ENCODE measurements at regions of chr19 and their contacts with region 1.

Region 1: DNA sequence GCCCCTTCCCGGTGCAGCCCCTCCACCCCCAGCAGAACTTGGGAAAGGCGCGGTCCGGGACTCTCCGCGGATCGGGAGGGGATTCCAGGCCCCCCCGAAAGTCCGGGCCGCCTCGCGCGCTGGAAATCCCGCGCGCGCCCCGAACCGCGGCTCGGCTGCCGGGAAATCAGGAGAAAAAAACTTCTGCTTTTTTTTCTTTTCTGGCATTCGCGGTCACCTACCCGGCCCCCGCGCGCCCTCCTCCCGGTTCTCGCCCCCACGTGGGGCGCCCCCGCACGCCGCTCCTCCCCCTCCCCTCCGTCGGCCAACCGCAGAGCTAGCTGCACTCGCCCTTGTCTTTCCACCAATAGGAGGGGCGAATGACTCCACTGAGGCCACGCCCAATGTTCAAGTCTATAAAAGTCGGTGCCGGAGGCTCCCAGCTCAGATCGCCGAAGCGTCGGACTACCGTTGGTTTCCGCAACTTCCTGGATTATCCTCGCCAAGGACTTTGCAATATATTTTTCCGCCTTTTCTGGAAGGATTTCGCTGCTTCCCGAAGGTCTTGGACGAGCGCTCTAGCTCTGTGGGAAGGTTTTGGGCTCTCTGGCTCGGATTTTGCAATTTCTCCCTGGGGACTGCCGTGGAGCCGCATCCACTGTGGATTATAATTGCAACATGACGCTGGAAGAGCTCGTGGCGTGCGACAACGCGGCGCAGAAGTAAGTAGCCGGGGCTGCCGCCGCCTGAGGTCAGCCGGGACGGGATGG is at the start of gene GADD45B:
- DNase-seq: peak; percentile 97
- H3K4me3 Mint-ChIP-seq: peak within 1 kb of the TSS; percentile 99
- H3K27ac Mint-ChIP-seq: peak within 1 kb of the TSS; percentile 88
- H3K4me1 Mint-ChIP-seq: peaks cover 19% of the 10 kb centered on the region
- H3K27me3 Mint-ChIP-seq: no peaks in the 10 kb centered on the region
- total RNA-seq, gene GADD45B: 31.2 to 39.2 TPM

Region 2: DNA sequence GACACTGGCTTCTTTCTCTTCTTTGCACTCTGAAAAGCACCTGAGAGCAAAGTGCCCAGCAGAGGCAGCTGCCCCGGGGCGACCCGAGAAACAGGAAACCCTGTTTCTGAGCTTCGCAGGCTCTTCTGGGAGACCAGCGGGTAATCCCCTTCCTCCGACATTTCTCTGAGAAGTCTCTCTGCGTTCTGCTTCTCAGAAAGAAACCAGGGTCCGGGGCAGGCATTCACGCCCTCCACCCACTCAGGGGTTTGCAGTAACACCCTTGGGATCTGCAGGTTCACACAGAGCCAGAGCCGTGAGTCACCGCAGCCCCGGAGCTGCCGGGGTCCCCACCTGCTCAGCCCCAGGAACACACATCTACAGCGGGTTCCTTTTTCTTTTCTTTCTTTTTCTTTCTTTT is 86.0 kb after region 1 on chr19:
- CTCF ChIA-PET with region 1: interaction called, 5 read pairs
- POLR2A ChIA-PET with region 1: interaction called, 13 read pairs
- DNase-seq: peak; percentile 80
- H3K4me3 Mint-ChIP-seq: peak overlapping the region; percentile 85
- H3K27ac Mint-ChIP-seq: peak overlapping the region; percentile 99
- H3K4me1 Mint-ChIP-seq: peaks cover 50% of the 10 kb centered on the region
- H3K27me3 Mint-ChIP-seq: no peaks in the 10 kb centered on the region

Region 3: DNA sequence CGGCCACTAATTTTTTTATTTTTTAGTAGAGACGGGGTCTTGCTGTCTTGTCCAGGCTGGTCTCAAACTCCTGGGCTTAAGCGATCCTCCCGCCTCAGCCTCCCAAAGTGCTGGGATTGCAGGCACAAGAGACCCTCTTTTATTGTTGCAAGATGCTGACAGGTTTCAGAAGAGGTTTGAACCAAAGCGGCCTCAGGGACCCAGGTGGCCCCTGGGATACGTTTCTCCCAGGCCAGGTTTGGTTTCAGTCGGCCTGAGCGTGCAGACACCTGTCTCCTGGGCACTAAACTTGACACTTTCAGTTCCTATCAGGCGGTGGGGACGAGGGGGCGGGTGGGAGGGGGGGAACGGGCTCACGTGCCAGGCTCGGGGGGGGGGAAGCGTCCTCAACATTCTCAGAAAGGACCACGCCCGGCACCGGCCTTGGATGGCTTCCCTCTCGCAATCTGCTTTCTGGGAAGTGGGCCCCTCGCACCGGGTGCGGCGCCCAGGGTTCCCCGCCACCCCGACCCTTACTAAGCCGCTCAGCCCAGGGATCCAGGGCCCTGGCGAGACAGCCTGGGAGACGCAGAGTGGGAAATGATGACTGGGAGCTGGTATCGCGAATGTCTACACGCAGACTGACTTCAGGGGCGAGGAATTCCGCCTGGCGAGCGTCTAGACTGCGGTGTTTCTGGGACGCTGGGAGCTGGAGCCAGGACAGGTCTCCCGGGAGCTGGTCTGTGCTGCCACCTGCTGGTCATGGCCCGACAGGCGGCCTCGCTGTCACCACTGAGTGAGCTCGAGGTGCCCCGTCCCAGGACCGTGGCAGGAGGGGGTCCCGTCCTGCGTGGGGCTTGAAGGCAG is 135.0 kb after region 1 on chr19:
- CTCF ChIA-PET with region 1: interaction called, 30 read pairs
- POLR2A ChIA-PET with region 1: interaction called, 12 read pairs
- DNase-seq: peak; percentile 90
- H3K4me3 Mint-ChIP-seq: peak overlapping the region; percentile 71
- H3K27ac Mint-ChIP-seq: peak overlapping the region; percentile 34
- H3K4me1 Mint-ChIP-seq: peaks cover 51% of the 10 kb centered on the region
- H3K27me3 Mint-ChIP-seq: peaks cover 13% of the 10 kb centered on the region

Region 4: DNA sequence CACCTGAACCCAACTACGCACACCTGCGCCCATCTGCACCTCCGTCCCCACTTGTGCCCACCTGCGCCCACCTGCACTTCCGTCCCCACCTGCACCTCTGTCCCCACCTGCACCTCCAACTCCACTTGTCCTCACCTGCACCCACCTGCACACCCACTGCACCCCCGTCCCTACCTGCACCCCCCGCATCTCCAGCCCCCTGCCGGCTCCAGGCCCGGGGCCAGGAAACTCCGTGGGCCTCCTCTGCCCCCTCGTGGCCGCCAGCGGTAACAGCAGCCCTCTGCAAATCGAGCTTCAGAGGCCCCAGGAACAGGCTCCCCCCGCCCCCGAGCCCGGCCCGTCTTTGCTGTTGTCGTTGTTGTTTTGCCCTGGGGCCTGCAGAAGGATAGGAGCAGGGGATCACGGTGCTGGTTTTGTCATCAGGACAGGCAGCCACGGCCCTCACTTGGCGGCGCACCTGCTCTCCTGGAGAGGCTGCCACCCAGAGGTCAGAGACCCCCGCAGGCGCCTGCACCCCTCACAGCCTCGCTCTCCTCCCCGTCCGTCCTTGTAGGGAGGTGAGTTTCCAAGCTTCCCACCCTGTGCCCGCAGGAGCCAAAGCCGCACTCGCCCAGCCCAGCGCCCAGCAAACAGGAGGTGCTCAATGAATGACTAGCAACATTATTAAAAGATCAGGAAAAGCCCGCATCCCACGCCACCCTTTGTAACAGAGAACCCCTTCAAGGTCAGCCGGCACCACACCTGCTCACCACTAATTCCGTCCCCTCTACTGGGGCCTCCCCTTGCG is 161.2 kb after region 1 on chr19:
- CTCF ChIA-PET with region 1: interaction called, 18 read pairs
- POLR2A ChIA-PET with region 1: interaction called, 3 read pairs
- DNase-seq: peak; percentile 78
- H3K4me3 Mint-ChIP-seq: peak overlapping the region; percentile 36
- H3K27ac Mint-ChIP-seq: no peak overlapping the region
- H3K4me1 Mint-ChIP-seq: peaks cover 19% of the 10 kb centered on the region
- H3K27me3 Mint-ChIP-seq: peaks cover 6% of the 10 kb centered on the region

Measured in activated CD4-positive, alpha-beta T cell treated with anti-CD3 and anti-CD28 coated beads, Interleukin-2, amount 10 ng/mL, durations not matched to agents 7 days and 5 days (primary cell).